RWPE1 (cell line): ENCODE measurements at regions of chr19 and their contacts with region 1.

Region 1: DNA sequence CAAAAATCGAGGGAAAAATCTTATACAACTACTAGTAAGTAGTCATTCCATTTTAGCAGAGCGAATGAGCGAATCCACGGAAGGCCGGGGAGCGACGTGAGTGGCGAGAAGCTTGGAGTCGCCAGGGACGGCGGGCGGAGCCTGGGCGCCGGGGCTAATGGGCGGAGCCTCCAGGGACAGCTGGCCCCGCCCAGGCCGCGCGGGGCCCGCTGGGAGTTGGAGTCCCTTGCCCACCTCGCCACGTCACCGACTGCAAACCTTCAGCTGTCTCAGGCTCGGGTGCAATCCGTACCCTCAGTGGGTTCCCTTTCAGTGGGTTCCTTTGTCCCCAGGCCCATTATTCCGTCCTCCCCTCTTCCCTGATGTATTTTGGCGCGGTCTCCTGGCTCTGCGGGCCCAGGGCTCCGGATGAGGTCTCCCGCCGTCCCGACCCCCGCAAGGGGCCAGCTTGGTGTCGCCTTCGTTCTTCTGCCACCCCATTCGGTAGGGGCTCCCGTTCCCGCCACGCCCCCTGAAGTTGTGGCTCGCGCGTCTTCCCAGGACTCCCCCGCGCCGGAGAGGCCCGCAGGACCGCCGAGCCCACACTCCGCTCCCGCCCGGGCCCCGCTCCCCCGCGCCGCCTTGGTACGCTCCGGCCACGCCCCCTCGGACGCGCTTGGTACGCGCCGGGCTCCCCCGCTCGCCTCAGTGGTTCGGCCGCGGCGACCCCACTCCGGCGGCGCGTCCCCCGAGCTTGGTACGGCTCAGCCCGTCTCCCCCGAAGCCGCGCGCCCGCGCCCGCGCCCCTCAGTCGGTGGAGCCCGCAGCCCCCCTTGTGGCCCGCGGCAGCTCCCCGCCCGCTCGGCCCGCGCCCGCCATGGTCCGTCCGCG is at the start of gene PTOV1:
- DNase-seq: peak; percentile 92
- H3K27ac ChIP-seq: peak within 1 kb of the TSS; percentile 97
- CTCF ChIP-seq: no peak

Region 2: GRCh38 chr19:49786376-49786820 is 64.3 kb before region 1 on chr19:
- CTCF ChIA-PET with region 1: no interaction called
- POLR2A ChIA-PET with region 1: no interaction called
- DNase-seq: peak; percentile 70
- H3K27ac ChIP-seq: peak overlapping the region; percentile 74
- CTCF ChIP-seq: no peak

Region 3: GRCh38 chr19:49869441-49870176 is 18.9 kb after region 1 on chr19:
- CTCF ChIA-PET with region 1: no interaction called
- POLR2A ChIA-PET with region 1: interaction called, 13 read pairs
- DNase-seq: peak; percentile 97
- H3K27ac ChIP-seq: peak overlapping the region; percentile 96
- CTCF ChIP-seq: no peak

Region 4: DNA sequence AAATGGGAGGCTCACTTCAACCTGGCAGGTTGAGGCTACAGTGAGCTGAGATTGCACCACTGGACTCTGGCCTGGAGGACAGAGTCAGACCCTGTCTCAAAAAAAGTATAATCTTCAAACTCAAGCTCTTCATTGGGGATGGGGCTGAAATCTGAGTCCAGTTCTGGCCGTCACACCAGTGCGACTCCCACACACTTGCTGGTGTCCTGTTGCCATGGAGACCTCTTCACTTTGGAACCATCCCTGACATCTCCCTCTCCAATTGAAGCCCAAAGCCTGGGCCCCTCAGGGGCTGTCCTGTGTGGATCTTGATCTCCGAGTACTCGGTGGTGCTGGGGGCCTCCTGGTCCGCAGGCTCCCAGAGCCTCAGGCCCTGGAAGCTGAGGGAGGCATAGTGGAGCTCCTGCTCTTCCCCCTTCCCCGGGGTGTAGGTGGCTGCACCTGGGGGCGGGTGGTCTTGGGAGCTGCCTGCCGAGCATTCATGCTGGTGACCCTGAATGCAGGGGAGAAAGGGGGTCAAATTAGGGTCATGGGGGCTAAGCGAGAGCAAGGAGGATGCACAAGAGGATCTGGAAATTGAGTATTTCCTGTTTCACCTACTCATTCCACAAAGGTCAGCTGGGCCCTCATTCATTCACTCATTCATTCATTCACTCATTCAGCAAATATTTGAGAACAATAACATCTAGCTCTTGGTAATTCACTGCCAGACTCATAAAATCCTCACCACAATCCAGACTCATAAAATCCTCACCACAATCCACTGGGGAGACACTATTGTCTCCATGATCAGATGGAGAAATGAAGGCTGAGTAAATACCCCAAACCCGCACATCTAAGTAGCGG is 99.3 kb after region 1 on chr19:
- CTCF ChIA-PET with region 1: no interaction called
- POLR2A ChIA-PET with region 1: no interaction called
- DNase-seq: no peak
- H3K27ac ChIP-seq: no peak overlapping the region
- CTCF ChIP-seq: no peak